Head of caudate nucleus (tissue), 42 donors: ENCODE measurements at regions of chr3 and their contacts with region 1.

Region 1: GRCh38 chr3:50327943-50328691 is at the start of gene TUSC2:
- DNase-seq: peak; percentile 92 to 99 (median 98)

Region 2: GRCh38 chr3:50245831-50246516 is 82.1 kb before region 1 on chr3:
- intact Hi-C with region 1: no loop called
- DNase-seq: peak; percentile 82 to 97 (median 92)

Region 3: GRCh38 chr3:50292159-50293078 is 35.7 kb before region 1 on chr3 and contains the start of gene IFRD2:
- intact Hi-C with region 1: loop called (anchors 5 kb)
- DNase-seq: peak; percentile 97 to 99 (median 98)